CD8-positive, alpha-beta memory T cell (primary cell): ENCODE measurements at regions of chr4 and their contacts with region 1.

Region 1: GRCh38 chr4:25312496-25313200 is at the start of gene ZCCHC4:
- DNase-seq: peak; percentile 86 to 92 (median 90)
- H3K4me3 ChIP-seq: peak within 1 kb of the TSS; percentile 90
- H3K4me3 Mint-ChIP-seq: peak within 1 kb of the TSS; percentile 98 to 99 (median 99)
- H3K27ac ChIP-seq: peak within 1 kb of the TSS; percentile 80
- H3K27ac Mint-ChIP-seq: peak within 1 kb of the TSS; percentile 84 to 97 (median 96)
- H3K4me1 ChIP-seq: peaks cover 12% of the 10 kb centered on the region
- H3K4me1 Mint-ChIP-seq: peaks cover 11 to 32% (median 20%) of the 10 kb centered on the region in 3 donors
- H3K27me3 ChIP-seq: no peaks in the 10 kb centered on the region
- H3K27me3 Mint-ChIP-seq: peaks cover 0 to 12% of the 10 kb centered on the region in 2 donors
- total RNA-seq, gene ZCCHC4: 14.1 to 15.0 TPM

Region 2: DNA sequence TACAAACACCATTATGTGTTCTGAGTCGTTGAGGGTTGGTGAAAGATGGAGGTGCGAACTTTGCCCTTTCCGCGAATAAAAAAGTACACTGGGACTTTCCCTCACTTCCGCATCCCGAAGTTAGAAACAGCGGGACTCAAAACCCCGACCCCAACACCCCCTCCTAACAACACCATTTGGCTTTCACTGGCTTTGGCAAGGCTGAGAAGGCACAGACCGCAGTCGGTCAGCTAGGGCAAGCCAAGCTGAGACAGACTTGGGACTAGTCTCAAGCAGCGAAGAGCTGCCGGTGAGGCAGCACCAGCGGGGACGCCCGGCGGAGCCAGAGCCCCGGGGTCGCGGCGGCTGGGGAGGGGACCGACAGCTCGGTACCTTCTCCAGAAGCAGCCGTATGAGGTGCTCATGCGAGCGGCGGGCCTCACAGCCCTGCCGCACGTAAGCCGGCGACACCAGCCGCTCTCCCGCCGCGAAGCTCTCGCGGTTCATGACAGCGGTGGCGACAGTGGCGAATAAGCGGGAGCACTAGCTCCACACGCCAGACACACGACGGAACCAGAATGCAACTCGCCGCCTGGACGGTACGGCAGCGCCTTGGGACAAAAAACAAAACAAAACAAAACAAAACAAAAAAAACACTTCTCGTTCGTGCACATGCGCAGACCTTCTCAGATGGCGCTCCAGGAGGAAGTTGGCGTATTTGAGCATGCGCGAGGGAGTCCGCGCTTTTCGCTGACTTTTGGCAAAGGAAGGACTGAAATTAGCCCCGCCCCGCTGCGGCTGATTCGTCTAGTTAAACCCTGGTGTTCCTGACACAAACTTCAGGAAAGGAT is 152.5 kb before region 1 on chr4 and contains the start of gene SEPSECS:
- CTCF ChIA-PET with region 1: interaction called, 22 read pairs
- POLR2A ChIA-PET with region 1: interaction called, 13 read pairs
- DNase-seq: peak; percentile 94 to 96 (median 95)
- H3K4me3 ChIP-seq: peak within 1 kb of the TSS; percentile 96
- H3K4me3 Mint-ChIP-seq: peak within 1 kb of the TSS; percentile 90 to 97 (median 94)
- H3K27ac ChIP-seq: peak within 1 kb of the TSS; percentile 97
- H3K27ac Mint-ChIP-seq: peak within 1 kb of the TSS; percentile 87 to 99 (median 97)
- H3K4me1 ChIP-seq: peaks cover 28% of the 10 kb centered on the region
- H3K4me1 Mint-ChIP-seq: peaks cover 48 to 66% (median 65%) of the 10 kb centered on the region in 3 donors
- H3K27me3 ChIP-seq: no peaks in the 10 kb centered on the region
- H3K27me3 Mint-ChIP-seq: peaks cover 0 to 5% of the 10 kb centered on the region in 2 donors
- total RNA-seq, gene SEPSECS: 8.6 to 10.0 TPM

Region 3: GRCh38 chr4:25215506-25215905 is 97.1 kb before region 1 on chr4:
- CTCF ChIA-PET with region 1: no interaction called
- POLR2A ChIA-PET with region 1: no interaction called
- DNase-seq: no peak
- H3K4me3 ChIP-seq: no peak overlapping the region
- H3K4me3 Mint-ChIP-seq: no peak overlapping the region
- H3K27ac ChIP-seq: no peak overlapping the region
- H3K27ac Mint-ChIP-seq: no peak overlapping the region
- H3K4me1 ChIP-seq: no peaks in the 10 kb centered on the region
- H3K4me1 Mint-ChIP-seq: no peaks in the 10 kb centered on the region
- H3K27me3 ChIP-seq: no peaks in the 10 kb centered on the region
- H3K27me3 Mint-ChIP-seq: peaks cover 0 to 2% of the 10 kb centered on the region in 2 donors

Region 4: GRCh38 chr4:25234390-25235370 is 78.0 kb before region 1 on chr4:
- CTCF ChIA-PET with region 1: interaction called, 52 read pairs
- POLR2A ChIA-PET with region 1: interaction called, 24 read pairs
- DNase-seq: peak; percentile 24 to 76 (median 56)
- H3K4me3 ChIP-seq: peak overlapping the region; percentile 55
- H3K4me3 Mint-ChIP-seq: peak overlapping the region; percentile 86 to 94 (median 89)
- H3K27ac ChIP-seq: peak overlapping the region; percentile 70
- H3K27ac Mint-ChIP-seq: peak overlapping the region; percentile 87 to 99 (median 95)
- H3K4me1 ChIP-seq: peaks cover 24% of the 10 kb centered on the region
- H3K4me1 Mint-ChIP-seq: peaks cover 38 to 55% (median 50%) of the 10 kb centered on the region in 3 donors
- H3K27me3 ChIP-seq: no peaks in the 10 kb centered on the region
- H3K27me3 Mint-ChIP-seq: no peaks in the 10 kb centered on the region

Region 5: DNA sequence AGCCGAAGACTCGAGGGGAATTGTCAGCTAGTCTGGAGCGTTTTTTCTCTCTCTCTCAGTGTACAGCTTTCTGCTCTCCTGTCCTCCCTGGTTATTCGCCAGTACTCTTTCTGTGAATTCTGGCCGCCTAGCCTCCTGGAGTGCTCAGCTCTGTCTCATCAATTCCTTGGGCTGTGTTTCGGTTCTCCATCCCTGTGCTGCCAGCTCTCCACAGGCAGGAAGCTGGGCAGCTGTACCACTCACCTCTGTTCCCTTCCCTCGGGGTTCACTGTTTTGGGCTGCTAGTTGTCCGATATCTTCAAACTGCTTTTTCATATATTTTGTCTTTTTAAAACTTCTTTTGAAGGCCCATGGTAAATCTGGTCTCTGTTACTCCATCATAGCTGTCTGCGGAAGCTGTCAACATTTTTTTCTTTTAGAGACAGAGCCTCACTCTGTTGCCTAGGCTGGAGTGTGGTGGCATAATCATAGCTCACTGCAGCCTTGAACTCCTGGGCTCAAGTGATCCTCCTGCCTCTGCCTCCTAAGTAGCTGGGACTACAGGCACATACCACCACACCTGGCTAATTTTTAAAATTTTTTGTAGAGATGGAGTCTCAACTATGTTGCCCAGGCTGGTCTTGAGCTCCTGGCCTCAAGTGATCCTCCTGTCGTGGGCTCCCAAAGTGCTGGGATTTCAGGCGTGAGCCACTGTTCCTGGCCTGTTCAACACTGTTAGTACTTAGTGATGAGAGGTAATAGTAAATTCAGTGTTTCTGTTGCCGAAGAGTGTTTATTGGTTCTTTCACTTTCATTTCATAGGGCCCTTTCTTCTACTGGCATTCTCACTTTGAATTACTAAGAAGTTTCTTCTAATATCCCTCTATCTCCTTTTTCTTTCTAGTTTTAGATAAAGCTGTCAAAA is 18.5 kb after region 1 on chr4:
- CTCF ChIA-PET with region 1: interaction called, 18 read pairs
- POLR2A ChIA-PET with region 1: interaction called, 3 read pairs
- DNase-seq: peak in 1 of 5 donors; percentile 8
- H3K4me3 ChIP-seq: peak overlapping the region; percentile 25
- H3K4me3 Mint-ChIP-seq: peak overlapping the region; percentile 83 to 93 (median 90)
- H3K27ac ChIP-seq: peak overlapping the region; percentile 52
- H3K27ac Mint-ChIP-seq: peak overlapping the region; percentile 70 to 99 (median 97)
- H3K4me1 ChIP-seq: peaks cover 4% of the 10 kb centered on the region
- H3K4me1 Mint-ChIP-seq: peaks cover 13 to 27% (median 25%) of the 10 kb centered on the region in 3 donors
- H3K27me3 ChIP-seq: no peaks in the 10 kb centered on the region
- H3K27me3 Mint-ChIP-seq: no peaks in the 10 kb centered on the region

Region 6: DNA sequence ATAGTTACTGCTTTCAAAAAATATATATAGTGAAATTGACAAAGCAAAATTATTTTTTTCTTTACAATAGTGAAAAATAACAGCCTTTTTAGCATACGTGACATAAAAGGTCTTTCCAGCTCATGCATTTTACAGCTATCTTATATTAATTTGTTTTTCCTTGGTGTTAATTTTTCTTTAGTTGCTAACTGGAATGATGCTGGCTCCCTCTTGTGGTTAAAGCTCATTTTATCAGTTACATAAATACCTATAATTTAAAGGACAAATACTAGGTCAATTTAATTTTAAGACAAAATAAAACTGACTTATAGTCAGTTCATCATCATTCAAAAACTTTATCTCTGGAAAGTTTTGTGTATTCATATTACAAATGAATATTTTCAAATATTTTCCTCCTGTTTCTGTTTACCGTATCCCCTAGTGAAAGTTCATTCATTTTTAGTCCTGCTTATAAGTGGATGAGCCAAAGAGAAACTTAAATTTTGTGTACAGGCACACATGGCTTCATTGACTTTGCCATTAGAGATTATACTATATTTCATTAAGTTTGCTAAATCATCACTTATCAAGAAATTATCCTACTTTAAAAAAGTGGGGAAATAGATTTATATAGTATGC is 54.5 kb after region 1 on chr4:
- CTCF ChIA-PET with region 1: interaction called, 29 read pairs
- POLR2A ChIA-PET with region 1: interaction called, 3 read pairs
- DNase-seq: no peak
- H3K4me3 ChIP-seq: no peak overlapping the region
- H3K4me3 Mint-ChIP-seq: no peak overlapping the region
- H3K27ac ChIP-seq: no peak overlapping the region
- H3K27ac Mint-ChIP-seq: no peak overlapping the region
- H3K4me1 ChIP-seq: no peaks in the 10 kb centered on the region
- H3K4me1 Mint-ChIP-seq: no peaks in the 10 kb centered on the region
- H3K27me3 ChIP-seq: no peaks in the 10 kb centered on the region
- H3K27me3 Mint-ChIP-seq: no peaks in the 10 kb centered on the region

Region 7: DNA sequence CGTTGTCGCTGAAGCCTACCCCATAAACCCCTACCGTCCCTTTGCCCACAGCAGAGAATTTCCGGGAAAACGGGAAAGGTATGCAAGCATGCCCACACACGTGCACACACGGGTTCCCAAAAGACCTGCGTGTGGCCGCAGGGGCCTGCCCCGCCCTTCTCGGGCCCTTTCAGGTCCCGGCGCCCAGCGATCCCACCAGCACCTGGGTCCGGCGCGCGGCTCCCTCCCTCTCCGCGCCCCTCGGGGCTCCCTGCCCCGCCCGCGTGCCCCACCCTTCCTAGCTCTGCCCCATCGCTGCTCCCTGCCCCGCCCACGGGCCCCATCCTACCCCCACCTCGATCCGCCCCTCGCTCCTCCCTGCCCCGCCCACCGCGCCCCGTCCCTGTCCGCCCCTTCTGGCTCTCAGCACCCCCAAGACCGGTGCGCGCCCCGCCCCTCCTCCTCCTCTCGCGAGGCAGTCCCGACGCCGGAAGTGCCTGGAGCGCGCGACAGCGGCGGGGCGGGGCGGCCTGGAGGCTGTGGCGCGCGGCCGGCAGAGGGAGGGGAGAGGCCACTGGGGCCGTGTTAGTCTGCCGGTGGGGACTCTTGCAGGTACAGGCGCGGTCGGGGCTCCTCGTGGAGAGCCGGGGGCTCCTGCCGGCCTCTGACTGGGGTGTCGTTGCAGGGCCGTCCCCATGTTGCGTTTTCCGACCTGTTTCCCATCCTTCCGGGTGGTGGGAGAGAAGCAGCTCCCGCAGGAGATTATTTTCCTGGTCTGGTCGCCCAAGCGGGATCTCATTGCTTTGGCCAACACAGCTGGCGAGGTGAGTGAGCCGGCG is 64.3 kb after region 1 on chr4 and contains the start of gene ANAPC4:
- CTCF ChIA-PET with region 1: interaction called, 12 read pairs
- POLR2A ChIA-PET with region 1: interaction called, 14 read pairs
- DNase-seq: peak; percentile 91 to 100 (median 98)
- H3K4me3 ChIP-seq: peak within 1 kb of the TSS; percentile 69
- H3K4me3 Mint-ChIP-seq: no peak within 1 kb of the TSS
- H3K27ac ChIP-seq: peak within 1 kb of the TSS; percentile 68
- H3K27ac Mint-ChIP-seq: peak within 1 kb of the TSS; percentile 27 to 93 (median 80)
- H3K4me1 ChIP-seq: peaks cover 22% of the 10 kb centered on the region
- H3K4me1 Mint-ChIP-seq: peaks cover 5 to 11% (median 10%) of the 10 kb centered on the region in 3 donors
- H3K27me3 ChIP-seq: no peaks in the 10 kb centered on the region
- H3K27me3 Mint-ChIP-seq: no peaks in the 10 kb centered on the region
- total RNA-seq, gene ANAPC4: 35.7 to 37.7 TPM